ENCODE measurements at regions of chr3 and their contacts with region 1.

Region 1: DNA sequence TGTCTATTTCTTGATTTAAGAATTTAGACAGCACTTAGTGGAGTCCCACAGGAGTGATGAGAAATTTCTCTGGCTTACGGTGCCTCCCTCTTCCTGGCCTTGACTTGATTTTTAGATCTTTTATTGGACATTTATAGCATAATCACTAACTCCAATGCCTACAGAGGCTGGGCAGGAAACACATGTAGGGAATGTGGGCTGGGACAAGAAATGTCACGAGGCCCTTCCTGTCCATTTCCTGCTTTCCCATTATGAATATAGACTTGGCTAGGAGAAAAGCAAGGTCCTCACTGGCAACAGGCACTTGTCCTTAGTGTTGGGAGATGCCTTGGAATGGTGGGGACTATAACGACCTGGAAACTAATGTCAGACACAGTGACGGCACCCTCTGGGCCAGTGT is 100.3 kb downstream of the MYLK start:
- DNase-seq: no peak
- ATAC-seq: peak; percentile 1; the same call in 1 of the 2 replicates
- H3K4me3 ChIP-seq: no peak overlapping the region
- H3K27ac ChIP-seq: peak overlapping the region; percentile 93
- H3K4me1 ChIP-seq: peaks cover 38% of the 10 kb centered on the region
- H3K27me3 ChIP-seq: no peaks in the 10 kb centered on the region
- CTCF ChIP-seq: no peak
- POLR2A ChIP-seq: no peak
- RAD21 ChIP-seq: no peak

Region 2: GRCh38 chr3:123750659-123751420 is 33.0 kb before region 1 on chr3:
- CTCF ChIA-PET with region 1: no interaction called
- POLR2A ChIA-PET with region 1: no interaction called
- dilution Hi-C with region 1: no loop called
- in situ Hi-C with region 1: no loop called
- intact Hi-C with region 1: loop called (anchors 2 kb)
- DNase-seq: peak; percentile 95
- ATAC-seq: peak; percentile 75
- H3K4me3 ChIP-seq: no peak overlapping the region
- H3K27ac ChIP-seq: peak overlapping the region; percentile 97
- H3K4me1 ChIP-seq: peaks cover 39% of the 10 kb centered on the region
- H3K27me3 ChIP-seq: no peaks in the 10 kb centered on the region
- CTCF ChIP-seq: no peak
- POLR2A ChIP-seq: no peak
- RAD21 ChIP-seq: 0 out of 2 replicates have a peak, but pooled peaks have one; percentile 10